ENCODE measurements at regions of chr2 and their contacts with region 1.

Region 1: DNA sequence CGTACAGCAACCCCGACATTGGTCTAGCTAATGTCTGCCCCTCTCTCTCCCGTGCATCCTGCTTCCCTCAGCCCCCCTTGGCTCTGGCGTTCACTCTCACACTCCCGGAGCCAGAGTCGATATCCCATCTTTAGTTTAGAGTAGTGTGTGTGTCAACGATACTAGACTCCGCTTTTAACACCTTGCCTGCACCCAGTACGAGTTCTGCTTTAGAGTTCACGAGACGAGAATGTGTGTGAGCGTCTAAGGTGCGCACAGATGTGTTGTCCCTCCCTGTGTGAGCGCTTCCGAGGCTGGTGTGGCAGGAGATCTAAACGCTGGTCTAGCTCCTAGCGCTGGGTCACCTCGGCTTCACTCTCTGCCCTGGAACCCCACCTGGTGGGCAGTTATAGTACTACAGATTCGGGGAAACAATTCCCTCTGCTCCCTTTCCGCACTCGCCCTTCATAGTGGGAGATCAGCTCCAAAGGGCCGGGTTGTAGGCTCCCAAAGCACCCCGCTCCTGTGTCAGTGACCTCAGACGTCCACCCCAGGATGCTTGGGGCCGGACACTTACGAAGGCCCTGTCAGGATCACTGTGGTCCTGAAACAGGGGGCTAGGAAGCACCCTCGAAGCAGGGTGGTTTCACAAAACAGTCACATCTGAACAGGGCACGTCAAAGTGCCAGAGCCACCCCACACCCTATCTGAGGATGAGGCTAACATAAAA is 2.6 kb upstream of the CYP26B1 start:
- DNase-seq: peak; percentile 87
- H3K4me3 ChIP-seq: peak overlapping the region; percentile 34 to 62
- H3K27ac ChIP-seq: no peak overlapping the region
- H3K4me1 ChIP-seq: peaks cover 12% of the 10 kb centered on the region
- H3K27me3 ChIP-seq: no peaks in the 10 kb centered on the region
- CTCF ChIP-seq: peak; percentile 89 to 94 (median 94)
- POLR2A ChIP-seq: no peak

Region 2: GRCh38 chr2:71545572-71546274 is 604.6 kb before region 1 on chr2:
- intact Hi-C with region 1: loop called (anchors 5 kb)
- DNase-seq: peak; percentile 69
- H3K4me3 ChIP-seq: no peak overlapping the region
- H3K27ac ChIP-seq: no peak overlapping the region
- H3K4me1 ChIP-seq: peaks cover 8% of the 10 kb centered on the region
- H3K27me3 ChIP-seq: no peaks in the 10 kb centered on the region
- CTCF ChIP-seq: peak; percentile 35 to 67 (median 52)
- POLR2A ChIP-seq: no peak

Region 3: GRCh38 chr2:72399879-72400278 is 249.6 kb after region 1 on chr2:
- intact Hi-C with region 1: no loop called
- DNase-seq: no peak
- H3K4me3 ChIP-seq: no peak overlapping the region
- H3K27ac ChIP-seq: no peak overlapping the region
- H3K4me1 ChIP-seq: no peaks in the 10 kb centered on the region
- H3K27me3 ChIP-seq: no peaks in the 10 kb centered on the region
- CTCF ChIP-seq: no peak
- POLR2A ChIP-seq: no peak

Measured in testis (tissue), 5 donors.